GM10248 (cell line): ENCODE measurements at regions of chr1 and their contacts with region 1.

Region 1: GRCh38 chr1:91165033-91165654 is 143.3 kb upstream of the ZNF644 start:
- DNase-seq: peak; percentile 81
- CTCF ChIP-seq: peak; percentile 100

Region 2: DNA sequence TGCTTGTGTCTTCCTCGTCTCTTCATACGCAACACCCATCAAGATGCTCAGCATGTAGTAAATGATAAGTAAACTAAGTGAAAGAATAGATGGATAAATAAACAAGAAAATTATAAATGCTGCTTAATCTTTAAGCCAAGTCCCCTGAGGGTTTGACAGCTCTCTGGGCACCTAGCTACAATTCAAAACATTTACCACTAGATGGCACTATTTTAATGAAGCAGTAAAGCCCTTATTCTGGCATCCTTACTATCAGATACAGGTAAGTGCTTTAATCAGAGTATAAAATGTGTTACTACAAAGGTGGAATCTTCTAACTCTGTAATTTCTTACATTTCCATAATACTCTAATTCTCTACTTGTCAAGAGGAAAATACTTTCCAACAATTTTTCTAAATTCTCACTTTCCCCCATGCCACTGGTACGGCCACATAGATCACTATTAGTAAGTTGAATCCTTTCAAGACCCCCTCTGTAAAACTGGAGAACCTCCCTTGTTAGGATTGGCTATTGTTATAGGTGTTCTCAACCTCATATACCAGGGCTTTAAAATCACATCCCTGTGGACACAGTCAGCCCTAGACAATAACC is 585.8 kb before region 1 on chr1:
- CTCF ChIA-PET with region 1: interaction called, 11 read pairs
- POLR2A ChIA-PET with region 1: no interaction called
- DNase-seq: peak; percentile 43
- CTCF ChIP-seq: peak; percentile 66

Region 3: DNA sequence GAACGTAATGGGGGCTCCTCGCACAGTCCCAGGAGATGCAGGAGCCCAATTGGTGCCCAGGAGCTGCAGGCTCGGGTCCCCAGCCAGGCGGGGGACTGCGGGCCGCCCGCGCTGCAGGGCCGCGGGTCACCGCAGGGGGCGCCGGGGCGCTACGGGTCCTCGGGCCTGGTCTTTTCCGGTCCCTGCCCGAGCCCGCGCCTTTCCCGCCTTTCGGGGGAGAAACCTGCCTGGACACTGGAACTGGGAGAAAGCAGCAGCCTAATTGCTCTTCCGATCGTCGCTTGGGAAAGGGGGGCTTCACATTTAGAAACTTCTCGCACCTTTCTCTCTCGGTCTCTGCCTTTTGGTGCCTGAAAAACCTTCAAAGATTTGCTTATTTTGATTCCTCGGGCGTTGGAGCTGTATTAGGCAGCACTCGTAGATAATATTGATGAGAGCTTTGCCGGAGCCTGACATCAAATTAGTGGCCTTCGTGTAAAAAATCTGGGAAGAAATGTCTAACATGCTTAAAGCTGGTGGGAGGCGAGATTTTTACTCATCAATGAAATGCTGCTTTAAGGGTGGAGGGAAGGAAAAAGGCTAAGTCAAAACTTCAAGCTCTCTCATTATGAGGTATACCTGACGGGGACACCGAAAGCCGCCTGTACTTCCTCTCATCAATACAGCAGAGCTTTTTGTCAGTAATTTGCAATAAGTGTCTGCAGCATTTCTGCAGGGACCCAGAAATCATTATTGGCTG is 435.5 kb before region 1 on chr1:
- CTCF ChIA-PET with region 1: interaction called, 56 read pairs
- POLR2A ChIA-PET with region 1: no interaction called
- DNase-seq: no peak
- CTCF ChIP-seq: peak; percentile 36

Region 4: DNA sequence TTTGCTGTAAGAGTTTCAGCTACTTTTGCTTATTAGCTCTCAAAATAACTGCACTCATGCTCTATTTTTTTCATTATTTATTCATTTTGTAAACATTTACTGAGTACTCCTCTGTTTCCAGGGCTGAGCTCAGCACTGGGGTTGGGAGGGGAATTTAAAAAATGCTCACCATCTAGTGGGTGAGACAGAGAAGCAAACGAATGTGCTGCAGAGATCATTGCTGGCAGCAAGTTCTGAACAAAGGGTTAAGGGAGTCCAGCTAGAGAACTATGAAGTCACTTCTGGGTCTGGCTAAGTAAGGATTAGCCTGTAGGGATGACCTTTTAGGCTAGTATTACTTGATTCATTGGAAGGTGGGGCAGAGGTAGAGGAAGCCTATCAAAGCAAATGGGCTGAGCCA is 44.2 kb before region 1 on chr1:
- CTCF ChIA-PET with region 1: interaction called, 10 read pairs
- POLR2A ChIA-PET with region 1: no interaction called
- DNase-seq: no peak
- CTCF ChIP-seq: no peak

Region 5: GRCh38 chr1:91148641-91149069 is 16.5 kb before region 1 on chr1:
- CTCF ChIA-PET with region 1: interaction called, 37 read pairs
- POLR2A ChIA-PET with region 1: no interaction called
- DNase-seq: no peak
- CTCF ChIP-seq: no peak

Region 6: DNA sequence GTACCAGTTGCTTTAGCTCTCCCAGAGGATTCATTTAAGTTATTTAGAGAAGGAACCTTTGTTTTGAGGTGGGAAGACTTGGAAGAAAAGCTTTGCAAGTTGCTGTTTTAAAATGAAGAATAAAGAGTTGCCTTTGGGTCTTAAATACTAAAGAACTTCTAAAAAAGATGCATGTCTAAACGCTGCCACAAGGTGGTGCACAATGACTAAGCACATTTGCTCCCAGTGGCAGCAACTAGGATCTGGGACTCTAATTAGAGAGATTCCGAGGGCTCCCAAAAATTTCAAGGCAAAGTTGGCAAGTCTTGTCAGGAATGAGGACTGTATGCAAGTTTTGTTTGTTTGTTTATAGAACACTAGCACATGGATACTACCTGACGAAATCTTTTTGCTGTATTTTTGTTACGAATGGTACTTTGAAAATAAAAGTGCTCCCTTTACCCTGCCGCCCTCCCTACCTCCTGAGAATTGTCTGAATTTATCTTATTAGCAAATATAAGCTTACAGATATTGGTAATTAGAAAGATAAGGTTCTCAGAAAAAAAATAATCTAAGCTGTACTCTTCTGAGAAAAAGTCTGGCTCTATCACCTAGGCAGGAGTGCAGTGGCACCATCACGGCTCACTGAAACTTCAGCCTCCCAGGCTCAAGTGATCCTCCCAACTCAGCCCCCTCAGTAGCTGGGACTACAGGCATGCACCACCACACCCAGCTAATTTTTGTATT is 117.7 kb after region 1 on chr1:
- CTCF ChIA-PET with region 1: interaction called, 38 read pairs
- POLR2A ChIA-PET with region 1: no interaction called
- DNase-seq: peak; percentile 45
- CTCF ChIP-seq: peak; percentile 83

Region 7: DNA sequence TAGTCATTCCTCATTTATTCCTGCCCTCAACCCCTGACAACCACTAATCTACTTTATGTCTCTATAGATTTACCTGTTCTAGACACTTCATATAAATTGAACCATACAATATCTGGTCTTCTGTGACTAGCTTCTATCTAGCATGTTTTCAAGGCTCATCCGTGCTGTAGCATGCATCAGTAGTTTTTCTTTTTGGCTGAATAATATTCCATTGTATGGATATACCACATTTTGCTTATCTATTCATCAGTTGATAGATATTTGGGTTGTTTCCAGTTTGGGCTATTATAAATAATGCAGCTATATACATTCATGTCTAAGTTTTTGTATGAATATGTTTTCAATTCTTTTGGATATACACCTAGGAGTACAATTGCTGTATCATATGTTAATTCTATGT is 138.0 kb after region 1 on chr1:
- CTCF ChIA-PET with region 1: no interaction called
- POLR2A ChIA-PET with region 1: no interaction called
- DNase-seq: no peak
- CTCF ChIP-seq: no peak